Cardiac septum (tissue), 1 donor: ENCODE measurements at regions of chr17 and their contacts with region 1.

Region 1: DNA sequence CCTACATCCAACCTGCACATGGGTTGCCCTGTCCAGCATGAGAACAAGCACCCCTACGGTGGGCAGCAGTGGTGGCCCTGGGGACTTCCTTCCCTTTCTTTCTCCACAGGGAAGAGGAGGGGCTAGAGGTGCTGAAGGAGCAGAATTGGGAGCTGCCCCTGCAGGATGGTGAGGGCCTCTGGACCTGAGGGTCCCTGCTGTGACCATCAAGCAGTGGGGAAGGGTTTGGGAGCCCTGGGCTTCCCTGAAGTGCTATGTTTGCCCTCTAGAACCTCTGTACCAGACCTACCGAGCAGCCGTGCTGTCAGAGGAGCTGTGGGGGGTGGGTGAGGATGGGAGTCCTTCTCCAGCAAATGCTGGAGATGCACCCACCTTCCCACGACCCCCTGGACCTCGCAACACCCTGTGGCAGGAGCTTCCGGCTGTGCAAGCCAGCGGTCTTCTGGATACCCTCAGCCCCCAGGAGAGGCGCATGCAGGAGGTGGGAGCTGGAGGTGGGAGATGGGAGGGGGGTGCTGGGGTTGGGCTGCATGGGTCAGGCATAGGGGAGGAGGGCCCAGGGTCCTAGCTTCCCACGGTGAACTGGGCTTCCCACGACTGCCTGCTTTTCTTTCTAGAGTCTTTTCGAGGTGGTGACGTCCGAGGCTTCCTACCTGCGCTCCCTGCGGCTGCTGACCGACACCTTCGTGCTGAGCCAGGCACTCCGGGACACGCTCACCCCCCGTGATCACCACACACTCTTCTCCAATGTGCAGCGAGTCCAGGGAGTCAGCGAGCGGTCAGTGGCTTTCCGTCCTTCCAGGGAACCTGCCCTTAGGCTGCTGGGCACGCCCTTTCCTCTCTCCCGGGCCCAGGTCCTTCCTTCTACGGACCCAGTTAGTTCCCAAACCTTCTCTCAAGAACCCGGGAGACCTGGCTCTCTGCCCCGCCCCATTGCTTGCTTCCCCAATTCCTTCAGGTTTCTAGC is 5.0 kb downstream of the ARHGEF15 start:
- DNase-seq: no peak

Region 2: GRCh38 chr17:8359769-8360168 is 44.7 kb after region 1 on chr17:
- intact Hi-C with region 1: loop called (anchors 5 kb)
- DNase-seq: no peak

Region 3: GRCh38 chr17:8369944-8370343 is 54.9 kb after region 1 on chr17:
- intact Hi-C with region 1: no loop called
- DNase-seq: no peak

Region 4: GRCh38 chr17:8900626-8901585 is 585.8 kb after region 1 on chr17:
- intact Hi-C with region 1: no loop called
- DNase-seq: peak; percentile 63